PC-9 (cell line): ENCODE measurements at regions of chr2 and their contacts with region 1.

Region 1: DNA sequence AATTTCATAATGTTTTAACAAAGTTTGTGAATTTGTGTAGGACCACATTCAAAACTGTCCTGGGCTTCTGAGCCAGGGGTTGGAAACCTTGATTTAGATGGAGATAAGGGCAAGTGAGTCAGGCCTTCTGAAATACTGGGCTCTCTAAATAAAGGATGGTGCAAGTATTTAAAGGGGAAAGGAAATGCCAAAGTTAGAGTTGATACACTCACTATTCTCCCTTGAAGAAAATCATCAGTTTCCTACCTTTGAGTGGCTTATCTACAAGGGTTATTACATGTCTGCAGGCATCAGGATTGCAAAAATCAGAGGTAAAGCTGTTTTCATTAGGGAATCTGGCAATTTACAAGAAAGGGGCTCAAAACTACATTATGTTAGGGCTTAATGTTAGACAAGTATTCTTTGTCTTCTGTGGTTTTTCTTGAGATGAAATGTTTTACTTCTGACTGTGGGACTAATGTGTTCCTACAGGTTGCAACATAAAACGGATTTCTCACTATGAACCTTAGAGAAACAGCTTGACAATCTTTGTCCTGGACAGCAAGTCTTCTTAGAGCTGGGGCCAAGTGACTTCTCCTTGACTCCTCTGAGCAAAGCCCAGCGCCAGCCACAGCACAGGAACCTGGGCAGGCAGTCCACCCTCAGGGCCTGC is 31.1 kb downstream of the RNU4ATAC start:
- DNase-seq: no peak
- H3K4me3 ChIP-seq: no peak overlapping the region
- H3K27ac ChIP-seq: no peak overlapping the region
- H3K4me1 ChIP-seq: no peaks in the 10 kb centered on the region
- H3K27me3 ChIP-seq: no peaks in the 10 kb centered on the region
- CTCF ChIP-seq: no peak

Region 2: DNA sequence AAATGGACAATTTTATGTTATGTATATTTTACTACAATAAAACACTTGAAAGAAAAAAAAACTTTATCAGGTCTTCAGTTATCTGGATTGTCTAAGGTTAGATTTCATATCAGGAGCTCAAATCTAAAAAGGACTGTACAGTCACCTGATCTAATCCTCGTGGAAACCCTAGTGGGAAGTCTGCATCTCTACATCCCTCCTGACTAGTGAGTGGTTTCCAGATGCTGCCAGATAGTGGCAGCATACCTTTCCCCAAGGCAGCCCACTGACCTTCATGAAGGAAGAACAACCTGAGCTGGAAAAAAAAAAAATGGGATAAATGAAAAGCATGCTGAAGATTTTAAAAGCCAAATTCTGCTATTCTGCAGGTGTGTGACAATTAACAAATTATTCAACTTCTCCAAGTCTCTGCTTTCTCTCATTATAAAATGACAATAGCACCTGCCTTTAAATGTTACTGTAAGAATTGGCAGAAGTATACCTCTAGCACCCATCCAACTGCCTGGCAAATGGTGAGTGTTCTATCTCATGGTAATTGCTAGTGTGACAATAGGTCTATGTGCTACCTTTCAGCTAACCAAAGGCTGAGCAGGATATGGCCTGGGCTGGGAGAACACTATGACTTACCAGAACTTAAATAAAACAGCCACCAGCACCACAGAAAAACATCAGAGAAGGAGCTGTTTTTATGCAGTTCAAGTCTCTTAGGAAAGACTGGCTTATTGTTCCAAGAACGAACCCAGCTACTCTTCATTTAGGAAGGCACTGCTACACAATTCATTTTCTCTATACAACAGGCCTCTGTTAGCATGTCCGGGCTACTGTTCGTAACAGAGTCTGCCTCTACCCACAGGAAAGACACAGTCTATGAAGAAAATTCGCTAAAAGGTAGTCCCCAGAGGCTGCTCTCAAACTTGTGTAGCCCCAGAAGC is 78.9 kb after region 1 on chr2:
- CTCF ChIA-PET with region 1: no interaction called
- POLR2A ChIA-PET with region 1: interaction called, 19 read pairs
- intact Hi-C with region 1: no loop called
- DNase-seq: no peak
- H3K4me3 ChIP-seq: no peak overlapping the region
- H3K27ac ChIP-seq: 0 out of 2 replicates have a peak overlapping the region, but pooled peaks have one; percentile 27
- H3K4me1 ChIP-seq: peaks cover 2% of the 10 kb centered on the region; the same call in 1 of the 2 replicates
- H3K27me3 ChIP-seq: no peaks in the 10 kb centered on the region
- CTCF ChIP-seq: no peak